K562 (cell line): ENCODE measurements at regions of chr1 and their contacts with region 1.

Region 1: GRCh38 chr1:228452194-228453021 is 34.8 kb upstream of the RNF187 start:
- DNase-seq: peak; percentile 73 to 83 (median 78)
- ATAC-seq: peak; percentile 25
- H3K4me3 ChIP-seq: no peak overlapping the region
- H3K27ac ChIP-seq: peak overlapping the region; percentile 41; the same call in 2 of the 3 replicates
- H3K4me1 ChIP-seq: peaks cover 28 to 32% of the 10 kb centered on the region in 2 experiments
- H3K27me3 ChIP-seq: no peaks in the 10 kb centered on the region
- CTCF ChIP-seq: no peak
- EP300 ChIP-seq: peak; percentile 70
- POLR2A ChIP-seq: peak; percentile 42
- RAD21 ChIP-seq: no peak

Region 2: DNA sequence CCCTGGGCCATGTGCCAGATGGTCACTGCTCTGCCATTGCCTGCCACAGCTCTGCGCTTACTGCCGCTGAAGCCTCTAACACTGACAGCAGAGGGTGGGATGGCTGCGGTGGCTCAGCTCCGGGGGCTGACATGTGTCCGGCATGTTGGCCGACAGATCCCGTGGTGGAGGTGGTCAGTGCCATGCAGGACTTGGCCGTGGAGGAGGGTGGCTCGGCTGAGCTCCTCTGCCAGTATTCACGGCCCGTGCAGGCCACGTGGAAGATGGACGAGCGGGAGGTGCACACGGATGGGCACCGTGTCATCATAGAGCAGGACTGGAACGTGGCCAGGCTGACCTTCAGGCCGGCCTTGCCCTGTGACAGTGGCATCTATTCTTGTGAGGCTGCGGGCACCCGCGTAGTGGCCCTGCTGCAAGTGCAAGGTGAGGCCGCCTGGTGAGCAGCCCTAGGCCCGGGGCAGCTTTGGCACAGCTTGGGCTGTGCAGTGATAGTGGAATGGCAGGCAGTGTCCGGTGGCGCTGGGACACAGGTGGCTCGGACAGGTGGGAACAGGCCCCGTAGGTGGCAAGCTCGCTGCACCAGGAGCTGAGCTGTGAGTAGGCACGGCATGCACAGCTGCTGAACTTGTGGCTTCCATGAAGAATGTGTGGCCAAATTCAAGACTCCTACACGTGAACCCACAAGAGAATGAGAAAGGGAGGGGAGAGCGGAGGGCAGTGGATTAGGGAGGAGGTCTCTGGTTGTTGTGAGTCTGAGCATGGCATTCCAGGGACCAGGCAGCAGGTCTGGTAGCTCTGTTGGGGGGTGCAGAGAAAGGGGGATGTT is 137.5 kb before region 1 on chr1:
- CTCF ChIA-PET with region 1: no interaction called
- POLR2A ChIA-PET with region 1: no interaction called
- in situ Hi-C with region 1: no loop called
- intact Hi-C with region 1: no loop called
- DNase-seq: no peak
- ATAC-seq: no peak
- H3K4me3 ChIP-seq: no peak overlapping the region
- H3K27ac ChIP-seq: no peak overlapping the region
- H3K4me1 ChIP-seq: peaks cover 0 to 27% of the 10 kb centered on the region in 2 experiments; a peak in 1 of 5 replicates
- H3K27me3 ChIP-seq: peaks cover 33 to 65% of the 10 kb centered on the region in 2 experiments; a peak in 4 of 5 replicates
- CTCF ChIP-seq: no peak
- EP300 ChIP-seq: no peak
- POLR2A ChIP-seq: no peak
- RAD21 ChIP-seq: no peak

Region 3: DNA sequence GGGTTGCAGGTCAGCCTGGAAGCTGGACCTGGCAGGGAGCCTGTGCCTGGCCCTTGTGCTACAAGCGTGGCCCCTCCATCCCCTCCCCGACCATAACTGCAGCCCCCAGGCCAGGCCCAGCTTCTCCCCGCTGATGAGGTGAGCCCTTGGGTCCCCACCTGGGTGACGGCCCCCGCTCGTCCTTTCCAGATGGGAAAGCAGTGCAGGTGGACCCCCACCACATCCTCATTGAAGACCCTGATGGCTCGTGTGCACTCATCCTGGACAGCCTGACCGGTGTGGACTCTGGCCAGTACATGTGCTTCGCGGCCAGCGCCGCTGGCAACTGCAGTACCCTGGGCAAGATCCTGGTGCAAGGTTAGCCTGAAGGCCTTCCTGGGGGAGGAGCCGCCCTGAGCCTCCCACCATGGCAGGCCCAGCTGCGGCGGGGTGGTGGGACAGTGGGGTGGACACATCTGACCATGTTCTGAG is 102.7 kb before region 1 on chr1:
- CTCF ChIA-PET with region 1: interaction called, 3 read pairs
- POLR2A ChIA-PET with region 1: interaction called, 4 read pairs
- in situ Hi-C with region 1: loop called (anchors 10 kb)
- intact Hi-C with region 1: loop called (anchors 5 kb)
- DNase-seq: no peak
- ATAC-seq: no peak
- H3K4me3 ChIP-seq: no peak overlapping the region
- H3K27ac ChIP-seq: no peak overlapping the region
- H3K4me1 ChIP-seq: peaks cover 0 to 38% of the 10 kb centered on the region in 2 experiments; a peak in 2 of 5 replicates
- H3K27me3 ChIP-seq: peaks cover 4 to 48% of the 10 kb centered on the region in 2 experiments; a peak in 3 of 5 replicates
- CTCF ChIP-seq: no peak
- EP300 ChIP-seq: no peak
- POLR2A ChIP-seq: no peak
- RAD21 ChIP-seq: no peak

Region 4: DNA sequence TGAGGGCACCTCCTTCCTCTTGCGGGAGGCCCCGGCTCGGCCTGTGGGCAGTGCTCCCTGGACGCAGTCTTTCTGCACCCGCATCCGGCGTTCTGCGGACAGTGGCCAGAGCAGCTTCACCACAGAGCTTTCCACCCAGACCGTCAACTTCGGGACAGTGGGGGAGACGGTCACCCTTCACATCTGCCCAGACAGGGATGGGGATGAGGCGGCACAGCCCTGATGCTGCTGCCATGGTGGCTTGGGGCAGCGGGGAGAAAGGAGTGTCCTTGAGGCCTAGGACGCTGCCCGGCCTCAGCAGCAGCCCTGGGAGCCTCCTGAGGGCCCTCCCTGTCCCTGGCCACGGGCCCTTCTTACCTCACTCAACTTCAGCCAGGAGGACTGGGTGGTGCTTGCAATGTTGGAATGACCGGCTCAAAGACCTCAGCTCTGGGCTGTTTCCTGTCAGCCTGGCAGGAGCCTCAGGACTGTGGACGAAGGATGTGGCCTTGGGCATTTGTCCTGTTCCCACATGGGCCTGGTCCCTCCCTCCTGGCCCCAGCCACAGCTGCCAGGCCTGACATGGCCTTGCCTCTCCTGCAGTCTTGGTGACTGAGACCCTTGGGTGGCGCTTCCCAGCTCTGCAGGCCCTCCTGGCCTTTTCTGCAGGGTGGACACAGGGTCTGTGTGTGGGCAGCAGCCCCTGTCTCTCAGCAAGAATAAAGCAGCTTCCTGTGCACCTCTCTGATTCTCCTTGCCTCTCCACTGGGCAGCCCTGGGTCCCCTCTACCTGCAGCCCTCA is 91.7 kb before region 1 on chr1:
- CTCF ChIA-PET with region 1: no interaction called
- POLR2A ChIA-PET with region 1: no interaction called
- in situ Hi-C with region 1: no loop called
- intact Hi-C with region 1: no loop called
- DNase-seq: no peak
- ATAC-seq: 0 out of 3 replicates have a peak, but pooled peaks have one; percentile 4
- H3K4me3 ChIP-seq: no peak overlapping the region
- H3K27ac ChIP-seq: no peak overlapping the region
- H3K4me1 ChIP-seq: peaks cover 0 to 63% of the 10 kb centered on the region in 2 experiments; a peak in 3 of 5 replicates
- H3K27me3 ChIP-seq: no peaks in the 10 kb centered on the region
- CTCF ChIP-seq: no peak
- EP300 ChIP-seq: no peak
- POLR2A ChIP-seq: no peak
- RAD21 ChIP-seq: no peak

Region 5: DNA sequence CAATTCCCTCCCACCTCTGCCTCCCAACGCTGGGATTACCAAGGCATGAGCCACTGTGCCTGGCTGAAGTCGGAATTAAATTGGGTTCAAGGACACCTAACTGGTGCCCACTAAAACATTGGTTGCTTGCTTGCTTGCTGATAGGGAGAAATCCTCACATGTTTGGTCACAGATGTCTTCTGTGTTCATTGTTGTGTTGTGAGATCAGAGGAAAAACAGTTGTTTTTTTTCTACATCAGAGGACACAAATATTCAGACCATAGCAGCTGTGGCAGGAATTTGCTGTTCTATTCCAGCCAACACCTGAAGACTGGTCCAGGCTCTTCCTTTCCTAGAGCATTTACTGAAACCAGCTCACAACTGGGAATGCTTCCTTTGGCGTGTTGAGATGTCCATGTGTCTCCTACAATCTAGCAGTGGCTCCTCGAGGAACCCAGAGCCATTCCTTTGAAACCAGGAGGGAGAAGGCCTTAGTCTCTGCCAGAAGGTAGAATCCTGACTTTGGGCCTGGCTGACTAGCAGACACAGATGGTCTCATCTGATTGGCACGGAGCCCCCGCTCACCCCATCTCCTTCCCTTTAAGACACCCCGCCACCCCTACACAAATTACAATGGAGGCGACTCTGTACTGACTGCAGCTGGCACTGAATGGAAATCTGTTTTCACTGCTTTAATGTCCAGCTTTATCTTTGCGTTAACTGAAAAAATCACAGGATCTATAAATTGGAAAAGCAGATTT is 11.5 kb before region 1 on chr1:
- CTCF ChIA-PET with region 1: no interaction called
- POLR2A ChIA-PET with region 1: interaction called, 58 read pairs
- in situ Hi-C with region 1: no loop called
- intact Hi-C with region 1: no loop called
- DNase-seq: no peak
- ATAC-seq: no peak
- H3K4me3 ChIP-seq: no peak overlapping the region
- H3K27ac ChIP-seq: no peak overlapping the region
- H3K4me1 ChIP-seq: peaks cover 0 to 6% of the 10 kb centered on the region in 2 experiments; a peak in 3 of 5 replicates
- H3K27me3 ChIP-seq: peaks cover 8 to 13% of the 10 kb centered on the region in 2 experiments; a peak in 3 of 5 replicates
- CTCF ChIP-seq: no peak
- EP300 ChIP-seq: no peak
- POLR2A ChIP-seq: no peak
- RAD21 ChIP-seq: no peak

Region 6: GRCh38 chr1:228913626-228914414 is 461.4 kb after region 1 on chr1:
- CTCF ChIA-PET with region 1: no interaction called
- POLR2A ChIA-PET with region 1: no interaction called
- in situ Hi-C with region 1: no loop called
- intact Hi-C with region 1: no loop called
- DNase-seq: no peak
- ATAC-seq: no peak
- H3K4me3 ChIP-seq: no peak overlapping the region
- H3K27ac ChIP-seq: no peak overlapping the region
- H3K4me1 ChIP-seq: no peaks in the 10 kb centered on the region
- H3K27me3 ChIP-seq: peaks cover 0 to 4% of the 10 kb centered on the region in 2 experiments; a peak in 1 of 5 replicates
- CTCF ChIP-seq: no peak
- EP300 ChIP-seq: no peak
- POLR2A ChIP-seq: no peak
- RAD21 ChIP-seq: no peak